OCI-LY7 (cell line): ENCODE measurements at regions of chr16 and their contacts with region 1.

Region 1: DNA sequence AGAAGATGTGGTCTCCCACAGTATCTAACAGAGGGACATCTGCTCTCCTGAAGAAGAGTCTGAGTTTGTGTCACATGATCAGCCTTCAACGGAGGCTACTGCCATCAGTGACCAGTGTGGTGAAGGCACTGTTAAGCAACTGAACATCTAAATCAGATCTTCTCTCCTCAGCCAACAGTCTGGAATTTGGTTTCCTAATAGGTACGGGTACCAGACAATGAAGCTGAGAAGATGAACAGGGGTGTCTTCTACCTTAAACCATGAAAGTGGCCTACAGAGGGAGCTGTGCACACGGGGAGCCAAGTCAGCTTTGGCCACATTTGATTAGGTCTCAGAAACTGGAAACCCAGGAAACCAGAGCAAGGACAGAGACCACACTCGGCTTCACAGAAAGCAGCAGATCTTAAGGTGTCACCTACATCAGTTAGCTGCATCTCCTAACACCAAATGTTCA is 41.8 kb downstream of the BRD7 start:
- DNase-seq: peak; percentile 68
- H3K4me3 ChIP-seq: no peak overlapping the region
- H3K27ac ChIP-seq: no peak overlapping the region
- H3K4me1 ChIP-seq: peaks cover 6% of the 10 kb centered on the region
- CTCF ChIP-seq: peak; percentile 87

Region 2: DNA sequence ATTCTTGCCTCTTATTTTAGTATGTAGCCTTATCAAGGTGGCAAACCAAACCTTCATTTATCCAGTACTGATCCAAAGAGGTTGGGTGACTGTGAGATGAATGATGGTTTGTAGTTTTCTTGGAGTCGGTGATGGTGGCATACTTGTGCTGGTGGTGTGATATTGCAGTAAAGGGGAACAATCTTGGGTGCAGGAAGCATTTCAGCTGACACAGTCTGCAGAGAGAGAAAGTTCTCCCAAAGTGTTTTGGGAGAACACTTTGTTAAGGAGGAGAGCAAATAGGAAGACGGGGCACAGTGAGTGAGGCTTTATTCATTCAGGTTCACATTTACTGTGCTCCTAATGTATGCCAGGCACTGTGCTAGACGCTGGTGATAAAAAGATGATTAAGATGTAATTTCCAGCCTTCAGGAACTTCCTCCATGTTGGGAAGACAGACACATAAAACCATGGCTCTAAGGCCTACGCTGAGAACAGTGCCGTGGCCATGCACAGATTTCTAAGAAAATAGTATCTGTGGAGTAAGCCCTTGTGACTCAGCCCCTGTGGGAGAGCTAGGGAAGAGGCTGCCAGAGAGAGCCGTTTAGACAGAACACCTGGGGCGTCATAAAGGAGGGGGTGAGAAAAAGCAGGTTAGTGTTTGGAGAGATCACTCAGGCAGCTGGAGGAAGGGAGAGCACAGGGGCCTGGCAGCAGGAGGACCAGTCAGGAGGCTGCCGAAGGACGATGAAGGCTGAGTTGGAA is 247.4 kb before region 1 on chr16:
- CTCF ChIA-PET with region 1: no interaction called
- POLR2A ChIA-PET with region 1: no interaction called
- intact Hi-C with region 1: loop called (anchors 10 kb)
- DNase-seq: no peak
- H3K4me3 ChIP-seq: no peak overlapping the region
- H3K27ac ChIP-seq: no peak overlapping the region
- H3K4me1 ChIP-seq: no peaks in the 10 kb centered on the region
- CTCF ChIP-seq: no peak

Region 3: DNA sequence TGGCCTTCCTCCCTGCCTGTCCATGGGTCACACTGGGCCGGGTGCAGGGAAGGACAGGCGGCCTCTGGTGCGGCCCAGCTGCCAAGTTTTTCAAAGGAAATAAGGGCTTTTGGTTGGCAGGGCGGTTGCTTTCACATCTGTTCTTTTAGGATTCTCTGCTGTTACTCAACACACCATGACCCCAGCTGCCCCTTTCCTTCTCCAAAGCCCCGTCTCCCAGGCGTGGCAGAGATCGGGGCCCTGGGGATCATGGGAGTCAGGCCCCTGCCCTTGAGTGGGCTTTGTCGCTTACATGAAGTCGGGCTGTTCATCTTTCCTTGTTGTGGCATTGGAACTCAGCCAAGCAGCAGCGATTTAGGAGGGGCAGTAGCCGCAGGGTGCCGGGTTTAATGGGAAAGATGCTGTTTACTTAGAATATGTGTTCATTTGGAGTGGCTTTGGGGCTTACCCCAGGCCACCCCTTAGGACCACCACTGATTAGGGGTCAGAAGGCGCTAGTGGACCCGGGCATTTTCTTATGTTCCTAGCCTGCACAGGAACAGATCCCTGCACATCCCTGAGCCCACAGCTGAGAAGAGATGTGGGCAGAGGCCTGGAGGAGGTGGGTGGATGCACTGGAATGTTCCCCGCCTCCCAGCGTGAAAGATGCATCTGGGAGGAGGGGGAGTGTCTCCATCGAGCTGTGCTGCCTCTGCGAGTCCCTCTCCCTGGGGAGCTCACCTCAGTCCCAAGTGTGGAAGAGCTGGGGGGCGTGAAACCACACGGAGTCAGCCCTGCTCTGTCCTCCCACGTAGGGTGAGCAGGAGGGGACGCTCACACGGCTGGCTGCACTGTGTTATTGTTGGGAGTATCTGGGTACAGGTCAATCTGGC is 67.4 kb before region 1 on chr16:
- CTCF ChIA-PET with region 1: no interaction called
- POLR2A ChIA-PET with region 1: interaction called, 3 read pairs
- intact Hi-C with region 1: loop called (anchors 10 kb)
- DNase-seq: no peak
- H3K4me3 ChIP-seq: no peak overlapping the region
- H3K27ac ChIP-seq: no peak overlapping the region
- H3K4me1 ChIP-seq: peaks cover 7% of the 10 kb centered on the region
- CTCF ChIP-seq: no peak